ENCODE measurements at regions of chr19 and their contacts with region 1.

Region 1: DNA sequence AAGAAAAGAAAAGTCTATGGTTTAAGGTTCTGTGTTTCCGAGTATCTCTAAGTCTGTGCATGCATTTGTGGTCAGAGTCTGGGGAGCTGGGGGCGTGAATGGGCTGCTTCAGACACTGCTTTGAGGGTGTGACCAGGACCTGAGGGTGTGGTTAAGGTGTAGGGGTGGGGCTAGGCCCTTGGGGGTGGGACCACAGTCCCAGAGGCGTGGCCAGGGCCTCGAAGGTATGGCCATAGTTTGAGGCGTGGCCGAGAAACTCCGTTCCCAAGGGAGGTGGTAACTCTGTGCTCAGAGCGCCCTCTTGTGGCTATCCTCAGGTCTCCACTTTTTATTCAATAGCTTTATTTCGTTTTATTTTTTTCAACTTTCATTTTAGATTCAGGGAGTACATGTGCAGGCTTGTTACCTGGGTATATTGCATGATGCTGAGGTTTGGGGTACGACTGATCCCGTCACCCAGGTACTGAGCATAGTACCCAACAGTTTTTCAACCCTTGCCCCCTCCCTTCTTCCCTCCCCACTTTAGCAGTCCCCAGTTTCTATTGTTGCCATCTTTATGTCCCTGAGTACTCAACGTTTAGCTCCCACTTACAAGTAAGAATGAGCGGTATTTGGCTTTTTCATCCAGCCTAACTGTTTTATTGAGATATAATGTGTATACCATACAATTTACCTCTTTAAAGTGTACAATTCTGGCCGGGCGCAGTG is 7.0 kb upstream of the CBLC start:
- DNase-seq: peak; percentile 99
- H3K27ac ChIP-seq: peak overlapping the region; percentile 73
- CTCF ChIP-seq: peak; percentile 71

Region 2: DNA sequence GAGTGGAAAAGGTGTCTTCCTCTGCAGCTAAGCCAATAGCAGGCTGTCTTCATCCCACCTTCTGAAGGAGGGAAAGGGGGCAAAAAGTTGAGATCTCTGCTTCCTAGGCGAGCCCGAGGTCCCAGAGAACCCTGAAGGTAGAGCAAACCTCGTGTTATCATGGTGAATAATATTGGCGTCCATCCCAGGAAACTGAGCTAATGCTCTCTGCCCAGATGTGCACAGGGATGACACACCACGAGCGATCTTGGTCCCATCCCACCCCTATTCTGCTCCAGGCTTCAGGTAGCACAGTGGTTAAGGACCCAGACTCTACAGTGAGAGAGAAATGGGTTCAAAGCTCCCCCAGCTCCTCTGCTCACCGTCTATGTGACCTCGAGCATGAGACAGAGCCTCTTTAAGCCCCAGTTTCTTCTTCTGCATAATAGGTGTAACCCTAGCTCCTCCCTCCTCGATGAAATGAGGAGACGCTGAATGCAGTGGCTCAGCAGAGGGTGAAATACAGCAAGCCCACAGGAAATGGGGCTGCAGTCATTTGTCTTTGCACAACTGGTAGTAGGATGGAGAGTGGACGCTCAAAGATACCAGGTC is 231.4 kb before region 1 on chr19:
- CTCF ChIA-PET with region 1: no interaction called
- POLR2A ChIA-PET with region 1: no interaction called
- DNase-seq: peak; percentile 48
- H3K27ac ChIP-seq: no peak overlapping the region
- CTCF ChIP-seq: no peak

Region 3: DNA sequence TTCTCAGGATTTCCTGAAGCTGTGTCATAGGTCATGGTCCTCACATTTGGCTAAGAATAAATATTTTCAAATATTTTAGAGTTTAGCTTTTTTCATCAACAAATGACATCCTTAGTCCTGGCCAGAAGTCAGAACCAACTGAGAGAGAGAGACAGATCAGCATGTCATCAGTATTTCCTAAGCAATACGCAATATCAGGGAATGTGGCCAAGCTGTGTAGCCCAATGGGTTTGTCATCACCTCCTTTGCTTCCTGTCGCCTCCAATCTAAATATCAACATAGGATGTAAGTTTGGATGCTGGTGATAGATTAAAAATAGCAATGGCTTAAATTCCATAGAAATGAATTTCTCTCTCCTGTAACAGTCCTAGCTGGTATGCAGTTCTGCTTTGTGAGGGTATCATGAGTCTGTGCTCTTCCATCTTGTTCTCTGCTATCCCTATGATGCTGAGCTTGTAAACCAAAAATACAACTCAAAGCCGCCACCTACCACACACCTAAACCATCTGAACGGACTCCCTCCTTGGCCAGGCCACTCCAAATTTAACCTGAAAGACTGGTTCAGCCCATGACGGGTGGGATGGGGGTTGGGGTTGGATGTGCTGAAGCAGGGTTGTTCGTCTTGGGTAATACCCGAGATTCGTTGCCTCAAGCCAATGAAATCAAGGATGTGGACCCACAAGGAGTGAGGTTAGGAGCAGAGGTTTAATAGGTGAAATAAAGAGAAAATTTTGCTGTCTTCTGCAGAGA is 167.3 kb before region 1 on chr19:
- CTCF ChIA-PET with region 1: no interaction called
- POLR2A ChIA-PET with region 1: no interaction called
- DNase-seq: peak; percentile 21
- H3K27ac ChIP-seq: no peak overlapping the region
- CTCF ChIP-seq: no peak

Region 4: DNA sequence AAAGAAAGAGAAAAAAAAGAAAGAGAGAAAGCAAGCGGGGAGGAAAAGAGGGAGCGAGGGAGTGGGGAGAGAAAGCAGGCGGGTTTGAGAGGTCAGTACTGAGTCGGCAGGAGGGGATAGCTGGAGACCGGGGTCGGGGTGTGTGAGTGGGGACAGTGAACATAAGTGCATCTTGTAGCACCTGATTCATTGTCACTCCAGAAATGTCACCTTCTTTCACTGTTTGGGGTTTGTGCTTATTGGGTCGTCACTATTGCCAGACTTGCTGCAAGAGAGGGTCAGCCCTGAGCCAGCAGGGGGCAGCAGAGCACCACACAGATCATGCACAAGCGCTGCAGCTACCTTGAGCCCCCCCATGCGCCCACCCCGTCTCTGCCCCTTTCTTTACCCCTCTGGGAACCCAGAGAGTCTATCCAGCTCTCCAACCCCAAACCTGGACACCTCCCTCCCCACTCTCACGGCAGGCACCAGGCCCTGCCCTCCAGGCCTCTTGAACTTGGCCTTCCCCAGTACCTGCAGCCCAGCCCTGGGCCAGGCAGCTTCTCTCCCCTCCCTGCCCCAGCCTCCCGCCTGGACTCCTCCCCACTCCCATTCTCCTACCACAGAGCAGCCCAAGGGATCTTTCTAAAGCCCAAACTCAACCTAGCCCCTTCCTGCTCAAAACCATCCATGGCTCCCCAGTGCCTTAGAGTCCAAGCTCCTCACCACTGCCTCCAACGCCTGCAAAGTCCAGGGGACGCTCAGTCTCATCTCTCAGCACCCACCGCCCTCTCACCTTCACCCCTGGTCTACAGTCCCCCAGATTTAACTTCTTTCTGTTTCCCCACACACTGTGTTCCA is 81.4 kb before region 1 on chr19:
- CTCF ChIA-PET with region 1: interaction called, 12 read pairs
- POLR2A ChIA-PET with region 1: no interaction called
- DNase-seq: no peak
- H3K27ac ChIP-seq: peak overlapping the region; percentile 55
- CTCF ChIP-seq: peak; percentile 88

Region 5: GRCh38 chr19:44752816-44753618 is 17.7 kb before region 1 on chr19:
- CTCF ChIA-PET with region 1: interaction called, 11 read pairs
- POLR2A ChIA-PET with region 1: no interaction called
- DNase-seq: peak; percentile 93
- H3K27ac ChIP-seq: peak overlapping the region; percentile 100
- CTCF ChIP-seq: no peak

Region 6: DNA sequence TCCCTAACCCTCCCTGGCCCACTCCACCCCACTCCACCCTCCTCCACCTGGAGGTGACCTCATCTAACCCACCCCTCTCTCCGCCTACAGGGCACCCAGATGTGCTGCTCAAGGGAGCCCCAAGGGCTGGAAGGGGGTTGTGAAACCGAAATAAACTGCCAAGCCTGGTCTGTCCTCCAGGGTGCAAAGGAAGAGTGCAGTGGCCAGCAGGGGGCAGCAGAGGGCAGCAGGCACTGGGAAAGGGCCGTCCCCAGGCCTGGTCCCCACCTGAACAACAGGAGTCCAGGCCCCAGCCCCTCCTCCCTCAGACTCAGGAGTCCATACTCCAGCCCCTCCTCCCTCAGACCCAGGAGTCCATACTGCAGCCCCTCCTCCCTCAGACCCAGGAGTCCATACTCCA is 29.8 kb after region 1 on chr19:
- CTCF ChIA-PET with region 1: no interaction called
- POLR2A ChIA-PET with region 1: no interaction called
- DNase-seq: peak; percentile 79
- H3K27ac ChIP-seq: peak overlapping the region; percentile 60
- CTCF ChIP-seq: peak; percentile 74

Region 7: DNA sequence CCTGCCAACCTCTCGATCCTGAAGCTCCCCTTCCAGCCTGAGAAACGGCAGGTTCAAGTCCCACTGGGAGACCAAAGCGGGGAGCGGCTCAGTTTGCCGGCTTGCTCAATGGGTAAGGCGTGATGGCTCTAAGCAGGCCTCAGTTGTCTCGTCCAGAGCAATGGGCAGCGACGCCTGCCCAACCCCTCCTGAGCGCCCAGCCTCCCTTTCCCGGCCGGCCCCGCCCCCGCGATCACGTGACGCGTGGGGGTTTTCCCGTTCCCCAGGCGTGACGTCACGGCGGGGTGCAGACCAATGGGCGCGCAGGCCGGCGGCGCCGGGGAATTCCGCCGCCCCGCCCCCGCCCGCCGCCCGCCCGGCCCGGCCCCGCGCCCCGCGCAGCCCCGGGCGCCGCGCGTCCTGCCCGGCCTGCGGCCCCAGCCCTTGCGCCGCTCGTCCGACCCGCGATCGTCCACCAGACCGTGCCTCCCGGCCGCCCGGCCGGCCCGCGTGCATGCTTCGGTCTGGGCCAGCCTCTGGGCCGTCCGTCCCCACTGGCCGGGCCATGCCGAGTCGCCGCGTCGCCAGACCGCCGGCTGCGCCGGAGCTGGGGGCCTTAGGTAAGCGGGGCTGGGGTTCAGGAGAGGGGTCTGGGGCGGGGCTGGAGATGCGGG is 230.5 kb after region 1 on chr19 and contains the start of gene RELB:
- CTCF ChIA-PET with region 1: no interaction called
- POLR2A ChIA-PET with region 1: no interaction called
- DNase-seq: peak; percentile 100
- H3K27ac ChIP-seq: peak within 1 kb of the TSS; percentile 90
- CTCF ChIP-seq: no peak

Measured in RWPE1 (cell line).